A673 (cell line): ENCODE measurements at regions of chr19 and their contacts with region 1.

Region 1: DNA sequence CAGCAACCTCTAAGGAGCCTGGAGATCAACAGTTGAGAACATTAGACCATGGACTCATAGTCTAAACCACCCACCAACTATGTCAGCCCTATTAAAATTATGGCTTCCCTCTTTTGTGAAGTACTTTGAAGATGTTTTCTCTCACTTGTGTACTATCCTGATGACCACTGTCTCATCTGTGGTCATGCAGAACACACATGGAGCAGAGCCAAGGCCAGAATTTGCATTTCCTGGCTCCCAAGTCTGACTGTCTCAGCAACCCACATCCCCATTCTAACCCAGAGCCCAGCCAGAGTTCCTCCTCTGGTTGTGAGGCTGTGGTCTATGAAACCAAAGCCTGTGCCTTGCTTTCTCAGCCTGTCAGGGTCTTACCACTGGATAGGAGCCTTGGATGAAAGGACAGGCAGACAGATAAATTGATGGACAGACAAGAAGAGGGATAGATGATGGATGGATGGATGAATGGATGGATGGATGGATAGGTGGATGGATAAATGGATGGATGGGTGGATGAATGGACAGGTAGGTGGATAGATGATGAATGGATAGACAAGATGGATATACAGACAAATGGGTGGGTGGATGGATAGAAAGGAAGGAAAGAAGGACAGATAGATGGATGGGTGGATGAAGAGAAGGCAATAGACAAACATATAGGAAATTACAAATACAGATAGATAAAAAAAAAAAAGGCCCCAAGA is 35.4 kb downstream of the ZNF557 start:
- DNase-seq: no peak
- H3K4me3 ChIP-seq: no peak overlapping the region
- H3K27ac ChIP-seq: no peak overlapping the region
- H3K4me1 ChIP-seq: peaks cover under 1% of the 10 kb centered on the region
- H3K27me3 ChIP-seq: no peaks in the 10 kb centered on the region
- CTCF ChIP-seq: no peak

Region 2: DNA sequence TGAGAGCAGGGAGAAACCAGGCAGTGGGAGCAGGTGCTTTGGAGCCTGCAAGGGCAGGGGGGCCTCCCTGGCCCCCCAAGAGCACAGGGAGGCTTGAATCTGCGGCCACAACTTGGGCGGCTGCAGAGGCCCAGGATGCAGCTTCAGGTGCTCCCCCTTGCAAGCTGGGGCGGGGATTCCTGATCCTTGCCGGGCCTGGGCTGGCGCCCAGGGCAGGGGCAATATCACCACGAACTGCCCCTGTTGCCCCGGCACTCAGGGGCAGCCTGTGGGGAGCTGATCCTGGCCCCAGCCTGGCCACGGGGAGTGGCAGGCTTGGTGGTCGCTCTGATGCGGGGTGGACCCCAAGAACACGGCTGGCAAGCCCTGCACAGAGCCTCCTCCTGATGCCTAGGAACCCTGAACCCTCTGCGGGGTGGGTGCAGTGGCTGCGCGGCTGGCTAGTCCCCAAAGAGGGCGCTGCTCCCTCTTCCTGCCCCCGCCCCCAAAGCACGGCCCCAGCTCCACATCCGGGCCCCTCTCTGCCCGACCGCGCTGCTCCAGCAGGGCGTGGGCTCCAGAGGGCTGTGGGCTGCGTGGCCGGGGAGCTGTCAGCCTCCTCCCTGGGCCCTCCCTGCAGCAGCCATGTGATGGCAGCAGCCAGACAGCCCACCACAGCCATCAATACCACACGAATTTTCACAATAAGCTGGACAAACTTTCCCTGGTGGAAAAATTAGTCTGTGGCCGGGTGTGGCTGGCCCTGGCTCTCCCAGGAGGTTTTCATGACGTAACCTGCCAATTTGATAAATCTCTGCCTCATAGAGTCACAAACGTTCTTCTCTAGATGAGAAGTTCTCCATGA is 553.1 kb before region 1 on chr19:
- CTCF ChIA-PET with region 1: interaction called, 14 read pairs
- POLR2A ChIA-PET with region 1: no interaction called
- intact Hi-C with region 1: no loop called
- DNase-seq: peak; percentile 68
- H3K4me3 ChIP-seq: no peak overlapping the region
- H3K27ac ChIP-seq: no peak overlapping the region
- H3K4me1 ChIP-seq: no peaks in the 10 kb centered on the region
- H3K27me3 ChIP-seq: no peaks in the 10 kb centered on the region
- CTCF ChIP-seq: peak; percentile 55

Region 3: GRCh38 chr19:7280940-7281666 is 176.2 kb after region 1 on chr19:
- CTCF ChIA-PET with region 1: no interaction called
- POLR2A ChIA-PET with region 1: no interaction called
- intact Hi-C with region 1: no loop called
- DNase-seq: no peak
- H3K4me3 ChIP-seq: no peak overlapping the region
- H3K27ac ChIP-seq: no peak overlapping the region
- H3K4me1 ChIP-seq: no peaks in the 10 kb centered on the region
- H3K27me3 ChIP-seq: no peaks in the 10 kb centered on the region
- CTCF ChIP-seq: no peak

Region 4: GRCh38 chr19:7386308-7386707 is 281.4 kb after region 1 on chr19:
- CTCF ChIA-PET with region 1: no interaction called
- POLR2A ChIA-PET with region 1: no interaction called
- intact Hi-C with region 1: loop called (anchors 5 kb)
- DNase-seq: no peak
- H3K4me3 ChIP-seq: no peak overlapping the region
- H3K27ac ChIP-seq: no peak overlapping the region
- H3K4me1 ChIP-seq: no peaks in the 10 kb centered on the region
- H3K27me3 ChIP-seq: peaks cover 3% of the 10 kb centered on the region
- CTCF ChIP-seq: 0 out of 2 replicates have a peak, but pooled peaks have one; percentile 10